WTC11 (cell line): ENCODE measurements at regions of chr7 and their contacts with region 1.

Region 1: GRCh38 chr7:134140889-134141867 is 14.0 kb downstream of the LRGUK start:
- DNase-seq: peak; percentile 90
- ATAC-seq: peak; percentile 92
- H3K4me3 Mint-ChIP-seq: peak overlapping the region; percentile 48
- H3K27ac Mint-ChIP-seq: peak overlapping the region; percentile 78
- H3K4me1 Mint-ChIP-seq: peaks cover 29% of the 10 kb centered on the region
- H3K27me3 Mint-ChIP-seq: no peaks in the 10 kb centered on the region
- CTCF ChIP-seq: peak; percentile 92

Region 2: GRCh38 chr7:134016223-134016941 is 124.8 kb before region 1 on chr7:
- CTCF ChIA-PET with region 1: interaction called, 29 read pairs
- POLR2A ChIA-PET with region 1: interaction called, 3 read pairs
- DNase-seq: peak; percentile 53
- ATAC-seq: peak; percentile 78
- H3K4me3 Mint-ChIP-seq: no peak overlapping the region
- H3K27ac Mint-ChIP-seq: no peak overlapping the region
- H3K4me1 Mint-ChIP-seq: peaks cover 24% of the 10 kb centered on the region
- H3K27me3 Mint-ChIP-seq: no peaks in the 10 kb centered on the region
- CTCF ChIP-seq: peak; percentile 37; the same call in 1 of the 2 replicates

Region 3: GRCh38 chr7:134031835-134032617 is 109.2 kb before region 1 on chr7:
- CTCF ChIA-PET with region 1: interaction called, 27 read pairs
- POLR2A ChIA-PET with region 1: no interaction called
- DNase-seq: no peak
- ATAC-seq: no peak
- H3K4me3 Mint-ChIP-seq: no peak overlapping the region
- H3K27ac Mint-ChIP-seq: no peak overlapping the region
- H3K4me1 Mint-ChIP-seq: peaks cover 42% of the 10 kb centered on the region
- H3K27me3 Mint-ChIP-seq: peaks cover 19% of the 10 kb centered on the region
- CTCF ChIP-seq: no peak

Region 4: DNA sequence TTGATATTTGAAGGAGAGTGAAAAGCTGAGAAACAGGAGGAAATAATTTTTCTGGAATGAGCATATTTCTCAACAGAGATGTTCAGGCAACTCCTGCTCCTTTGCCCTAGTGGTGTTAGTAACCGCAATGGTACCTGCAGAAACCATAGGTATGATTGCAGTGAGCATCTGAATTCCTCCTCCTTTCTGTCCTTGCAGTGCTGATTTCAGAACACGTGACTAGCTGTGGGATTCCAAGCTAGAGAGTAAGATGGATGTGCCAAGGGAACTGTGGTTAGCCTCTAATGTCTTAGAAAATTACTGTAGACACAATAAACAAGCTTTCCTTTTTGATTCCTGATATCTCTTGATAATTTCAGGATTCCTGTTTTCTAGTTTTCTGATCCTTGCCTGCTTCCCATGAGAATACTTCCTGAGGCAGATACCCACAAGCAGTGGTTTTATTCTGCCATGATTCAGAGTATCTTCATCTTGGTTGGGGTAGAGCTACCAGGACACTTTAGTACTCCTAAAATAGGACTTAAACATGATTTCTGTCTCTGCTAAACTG is 13.5 kb after region 1 on chr7:
- CTCF ChIA-PET with region 1: interaction called, 13 read pairs
- POLR2A ChIA-PET with region 1: interaction called, 3 read pairs
- DNase-seq: no peak
- ATAC-seq: no peak; the same call in 1 of the 2 replicates
- H3K4me3 Mint-ChIP-seq: no peak overlapping the region
- H3K27ac Mint-ChIP-seq: peak overlapping the region; percentile 36
- H3K4me1 Mint-ChIP-seq: peaks cover 34% of the 10 kb centered on the region
- H3K27me3 Mint-ChIP-seq: no peaks in the 10 kb centered on the region
- CTCF ChIP-seq: no peak

Region 5: DNA sequence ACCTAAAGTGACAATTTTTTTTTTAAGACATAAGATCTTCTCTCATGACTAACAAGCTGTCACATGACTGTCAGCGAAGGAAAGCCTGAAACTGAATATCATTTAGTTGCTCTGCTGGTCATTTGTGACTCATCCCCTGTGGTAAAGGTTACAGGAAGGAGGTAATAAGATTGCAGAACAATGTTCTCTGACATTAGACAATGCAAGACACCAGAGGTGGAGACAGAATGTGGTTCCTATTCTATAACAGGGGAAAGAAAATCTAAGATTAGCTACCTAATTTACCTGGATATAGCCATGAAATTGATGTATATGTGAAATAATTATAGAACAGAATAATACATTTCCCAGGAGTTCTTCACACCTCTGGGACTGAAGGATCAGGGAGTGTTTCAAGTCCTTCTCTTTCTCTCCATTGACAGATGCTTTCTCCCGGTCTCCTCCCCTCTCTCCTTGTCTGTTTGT is 33.7 kb after region 1 on chr7:
- CTCF ChIA-PET with region 1: no interaction called
- POLR2A ChIA-PET with region 1: no interaction called
- DNase-seq: no peak
- ATAC-seq: no peak
- H3K4me3 Mint-ChIP-seq: no peak overlapping the region
- H3K27ac Mint-ChIP-seq: no peak overlapping the region
- H3K4me1 Mint-ChIP-seq: peaks cover 5% of the 10 kb centered on the region
- H3K27me3 Mint-ChIP-seq: no peaks in the 10 kb centered on the region
- CTCF ChIP-seq: no peak

Region 6: DNA sequence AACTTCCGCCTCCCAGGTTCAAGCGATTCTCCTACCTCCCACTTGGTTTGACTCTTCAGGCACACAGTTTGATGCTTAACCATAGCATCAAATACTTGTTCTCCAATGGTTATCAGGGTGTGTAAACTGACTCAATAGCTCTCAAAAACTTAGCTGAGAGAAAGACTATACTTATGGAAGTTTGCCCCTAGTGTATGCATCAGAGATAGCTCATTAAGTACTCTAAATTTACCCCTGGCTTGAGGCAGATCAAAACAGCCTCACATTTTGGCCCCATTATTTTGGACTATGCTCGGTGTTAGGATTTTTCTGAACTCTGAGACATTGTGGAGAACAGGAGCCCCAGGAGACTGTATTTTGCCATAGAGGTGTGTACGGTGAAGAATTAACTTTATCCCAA is 216.3 kb after region 1 on chr7:
- CTCF ChIA-PET with region 1: interaction called, 11 read pairs
- POLR2A ChIA-PET with region 1: no interaction called
- DNase-seq: no peak
- ATAC-seq: no peak
- H3K4me3 Mint-ChIP-seq: no peak overlapping the region
- H3K27ac Mint-ChIP-seq: no peak overlapping the region
- H3K4me1 Mint-ChIP-seq: no peaks in the 10 kb centered on the region
- H3K27me3 Mint-ChIP-seq: peaks cover 14% of the 10 kb centered on the region
- CTCF ChIP-seq: no peak; the same call in 1 of the 2 replicates